ENCODE measurements at regions of chr12 and their contacts with region 1.

Region 1: GRCh38 chr12:121391619-121392324 is 8.1 kb upstream of the RNF34 start:
- DNase-seq: no peak
- H3K4me3 ChIP-seq: no peak overlapping the region
- H3K4me3 Mint-ChIP-seq: no peak overlapping the region
- H3K27ac Mint-ChIP-seq: no peak overlapping the region
- H3K4me1 ChIP-seq: no peaks in the 10 kb centered on the region
- H3K4me1 Mint-ChIP-seq: peaks cover 8% of the 10 kb centered on the region
- H3K27me3 ChIP-seq: no peaks in the 10 kb centered on the region
- H3K27me3 Mint-ChIP-seq: no peaks in the 10 kb centered on the region
- CTCF ChIP-seq: no peak

Region 2: DNA sequence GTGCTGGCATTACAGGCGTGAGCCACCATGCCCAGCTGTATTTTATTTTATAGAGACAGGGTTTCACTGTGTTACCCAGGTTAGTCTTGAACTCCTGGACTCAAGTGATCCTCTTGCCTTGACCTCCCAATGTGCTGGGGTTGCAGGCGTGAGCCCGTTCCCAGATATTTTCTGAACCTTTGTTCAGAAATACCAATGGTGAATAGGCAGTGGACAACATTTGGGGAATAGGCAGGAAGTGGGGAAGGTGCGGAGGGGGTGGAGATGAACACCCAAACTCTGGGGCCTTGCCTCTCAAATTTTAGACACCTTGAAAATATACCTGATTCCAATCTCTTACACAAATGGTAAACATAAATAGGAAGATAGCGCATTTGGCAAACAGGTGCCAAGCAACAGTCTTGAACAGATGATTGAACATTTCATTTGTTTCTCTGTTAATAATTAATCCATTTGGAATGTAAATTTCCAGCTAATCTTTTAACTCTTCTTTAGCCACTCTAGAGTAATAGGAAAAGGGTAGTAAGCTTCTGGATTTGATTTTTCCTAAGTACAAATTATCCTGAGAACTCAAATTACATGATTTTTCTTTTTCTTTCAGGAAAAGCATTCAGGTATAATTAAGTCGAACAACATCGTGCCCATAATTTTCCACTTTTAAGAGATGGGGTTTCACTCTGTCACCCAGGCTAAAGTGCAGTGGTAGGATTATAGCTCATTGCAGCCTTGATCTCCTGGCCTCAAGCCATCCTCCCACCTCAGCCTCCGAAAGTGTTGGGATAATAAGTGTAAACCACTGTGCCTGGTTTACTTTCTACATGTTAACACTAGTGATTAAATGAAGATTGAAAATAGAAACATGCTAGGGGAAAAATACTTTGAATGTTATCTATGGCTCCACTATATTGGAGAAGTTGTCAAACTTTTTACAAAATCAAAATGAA is 14.7 kb before region 1 on chr12:
- CTCF ChIA-PET with region 1: no interaction called
- POLR2A ChIA-PET with region 1: no interaction called
- intact Hi-C with region 1: no loop called
- DNase-seq: peak in 1 of 2 experiments; percentile 50
- H3K4me3 ChIP-seq: no peak overlapping the region
- H3K4me3 Mint-ChIP-seq: peak overlapping the region; percentile 63
- H3K27ac Mint-ChIP-seq: peak overlapping the region; percentile 91
- H3K4me1 ChIP-seq: peaks cover 15% of the 10 kb centered on the region
- H3K4me1 Mint-ChIP-seq: peaks cover 10% of the 10 kb centered on the region
- H3K27me3 ChIP-seq: no peaks in the 10 kb centered on the region
- H3K27me3 Mint-ChIP-seq: no peaks in the 10 kb centered on the region
- CTCF ChIP-seq: no peak

Region 3: DNA sequence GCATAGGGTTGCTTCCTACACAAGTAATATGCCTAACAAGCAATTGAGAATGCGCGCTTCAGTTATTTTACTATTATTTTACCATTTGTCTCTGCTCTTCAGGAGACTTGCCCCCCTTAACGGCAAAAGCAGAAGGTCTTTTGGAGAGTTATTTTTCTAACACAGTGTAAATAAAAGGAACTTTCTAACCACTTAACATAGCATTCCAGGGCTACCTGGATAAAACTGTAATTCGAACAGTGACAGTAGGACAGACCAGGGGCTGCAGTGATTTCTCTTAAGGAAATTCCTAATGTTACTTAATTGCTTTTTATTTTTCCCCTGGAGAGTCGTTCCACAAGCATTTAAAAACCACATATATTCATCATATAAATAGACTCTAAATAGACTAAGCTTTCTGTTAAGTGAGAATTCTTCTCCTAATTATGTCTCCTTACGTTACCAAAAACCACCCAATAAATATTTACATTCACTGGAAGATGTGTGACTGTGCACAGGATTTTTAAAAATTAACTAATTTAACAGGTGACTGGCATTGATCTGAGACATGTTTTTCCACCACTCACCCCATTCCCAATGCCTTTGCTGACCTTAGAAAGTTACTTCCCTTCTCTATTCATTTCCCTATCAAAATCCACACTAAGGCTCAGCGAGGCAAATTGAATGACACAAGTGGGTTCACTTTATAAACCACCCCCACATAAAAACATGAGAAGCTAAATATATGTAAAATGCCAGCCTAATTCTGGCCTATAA is 80.6 kb after region 1 on chr12:
- CTCF ChIA-PET with region 1: no interaction called
- POLR2A ChIA-PET with region 1: no interaction called
- intact Hi-C with region 1: no loop called
- DNase-seq: no peak
- H3K4me3 ChIP-seq: no peak overlapping the region
- H3K4me3 Mint-ChIP-seq: no peak overlapping the region
- H3K27ac Mint-ChIP-seq: no peak overlapping the region
- H3K4me1 ChIP-seq: 0 out of 2 replicates have a peak, but pooled peaks cover 9% of the 10 kb centered on the region
- H3K4me1 Mint-ChIP-seq: no peaks in the 10 kb centered on the region
- H3K27me3 ChIP-seq: no peaks in the 10 kb centered on the region
- H3K27me3 Mint-ChIP-seq: no peaks in the 10 kb centered on the region
- CTCF ChIP-seq: no peak

Region 4: GRCh38 chr12:121550974-121551634 is 159.3 kb after region 1 on chr12:
- CTCF ChIA-PET with region 1: no interaction called
- POLR2A ChIA-PET with region 1: no interaction called
- intact Hi-C with region 1: no loop called
- DNase-seq: peak in 1 of 2 experiments; percentile 37
- H3K4me3 ChIP-seq: no peak overlapping the region
- H3K4me3 Mint-ChIP-seq: no peak overlapping the region
- H3K27ac Mint-ChIP-seq: no peak overlapping the region
- H3K4me1 ChIP-seq: no peaks in the 10 kb centered on the region
- H3K4me1 Mint-ChIP-seq: no peaks in the 10 kb centered on the region
- H3K27me3 ChIP-seq: no peaks in the 10 kb centered on the region
- H3K27me3 Mint-ChIP-seq: no peaks in the 10 kb centered on the region
- CTCF ChIP-seq: no peak

Region 5: GRCh38 chr12:122593910-122594309 is 1202.1 kb after region 1 on chr12:
- CTCF ChIA-PET with region 1: no interaction called
- POLR2A ChIA-PET with region 1: interaction called, 11 read pairs
- intact Hi-C with region 1: no loop called
- DNase-seq: no peak
- H3K4me3 ChIP-seq: no peak overlapping the region
- H3K4me3 Mint-ChIP-seq: no peak overlapping the region
- H3K27ac Mint-ChIP-seq: no peak overlapping the region
- H3K4me1 ChIP-seq: no peaks in the 10 kb centered on the region
- H3K4me1 Mint-ChIP-seq: no peaks in the 10 kb centered on the region
- H3K27me3 ChIP-seq: no peaks in the 10 kb centered on the region
- H3K27me3 Mint-ChIP-seq: no peaks in the 10 kb centered on the region
- CTCF ChIP-seq: no peak